Naive thymus-derived CD8-positive, alpha-beta T cell (primary cell): ENCODE measurements at regions of chr6 and their contacts with region 1.

Region 1: GRCh38 chr6:52361945-52362442 is at the start of gene PAQR8:
- DNase-seq: peak; percentile 75 to 90 (median 83)
- ATAC-seq: peak; percentile 84
- H3K4me3 Mint-ChIP-seq: peak within 1 kb of the TSS; percentile 97 to 99 (median 98)
- H3K27ac Mint-ChIP-seq: peak within 1 kb of the TSS; percentile 94 to 99 (median 98)
- H3K4me1 Mint-ChIP-seq: peaks cover 26 to 54% (median 50%) of the 10 kb centered on the region in 4 donors
- H3K27me3 Mint-ChIP-seq: no peaks in the 10 kb centered on the region
- polyA plus RNA-seq, gene PAQR8: 14.3 to 35.0 (median 30.6) TPM

Region 2: DNA sequence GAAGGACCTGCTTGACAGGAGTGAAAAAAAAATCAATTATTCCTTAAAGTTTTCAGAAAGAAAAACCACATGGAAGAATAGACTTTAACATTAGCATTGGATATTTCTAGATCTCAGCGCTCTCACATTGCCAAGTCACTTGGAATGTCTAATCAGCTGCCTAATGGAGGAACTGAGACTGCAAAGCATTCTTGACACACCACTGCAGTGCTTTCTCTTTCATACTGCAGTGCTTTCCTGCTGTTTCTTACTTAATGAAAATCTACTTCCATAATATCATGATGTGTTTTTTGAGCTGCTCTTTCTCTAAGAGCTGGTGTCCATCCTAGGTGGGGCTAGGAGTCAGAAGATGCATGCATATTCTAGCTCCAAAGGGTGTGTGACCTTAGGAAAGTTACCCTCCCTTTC is 57.0 kb before region 1 on chr6:
- POLR2A ChIA-PET with region 1: interaction called, 52 read pairs
- DNase-seq: peak in 1 of 10 donors; percentile 16
- ATAC-seq: peak; percentile 19 to 24
- H3K4me3 Mint-ChIP-seq: peak overlapping the region; percentile 46 to 84 (median 76)
- H3K27ac Mint-ChIP-seq: peak overlapping the region; percentile 91 to 99 (median 95)
- H3K4me1 Mint-ChIP-seq: peaks cover 46 to 78% (median 74%) of the 10 kb centered on the region in 4 donors
- H3K27me3 Mint-ChIP-seq: no peaks in the 10 kb centered on the region

Region 3: DNA sequence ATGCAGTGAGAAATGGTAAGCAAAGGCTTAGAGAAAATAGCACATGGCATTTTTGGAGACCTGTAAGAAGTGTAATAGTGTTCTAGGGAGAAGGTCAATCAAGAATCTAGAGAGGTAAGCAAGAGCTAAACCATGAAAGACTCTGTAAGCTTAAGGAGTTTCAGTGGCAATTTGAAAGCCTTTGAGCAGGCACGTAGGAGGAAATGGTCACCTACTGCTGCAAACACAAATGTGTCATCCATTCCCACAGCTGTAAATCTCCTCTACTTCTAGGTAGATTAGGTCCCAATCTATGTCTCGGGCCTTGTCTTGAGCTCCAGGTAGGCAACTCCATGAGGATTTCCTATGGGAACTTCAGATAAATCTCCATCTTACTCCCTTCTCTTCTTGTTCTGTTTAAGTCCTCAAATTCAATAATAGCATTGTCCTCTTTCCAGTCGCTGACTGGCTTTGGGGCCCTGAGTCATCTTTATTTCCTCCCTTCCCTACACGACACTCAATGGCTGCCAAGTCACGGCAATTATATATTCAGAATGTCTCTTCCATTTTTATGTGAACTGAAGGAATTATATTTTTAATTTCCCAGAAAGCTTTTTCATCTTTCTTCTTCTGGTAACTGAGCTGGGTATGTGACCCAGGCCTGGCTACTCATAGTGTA is 24.2 kb before region 1 on chr6:
- POLR2A ChIA-PET with region 1: interaction called, 19 read pairs
- DNase-seq: no peak
- ATAC-seq: no peak
- H3K4me3 Mint-ChIP-seq: peak overlapping the region in 2 of 10 donors; percentile 3 to 47
- H3K27ac Mint-ChIP-seq: peak overlapping the region in 7 of 10 donors; percentile 1 to 92 (median 61)
- H3K4me1 Mint-ChIP-seq: peaks cover 46 to 71% (median 64%) of the 10 kb centered on the region in 4 donors
- H3K27me3 Mint-ChIP-seq: no peaks in the 10 kb centered on the region

Region 4: DNA sequence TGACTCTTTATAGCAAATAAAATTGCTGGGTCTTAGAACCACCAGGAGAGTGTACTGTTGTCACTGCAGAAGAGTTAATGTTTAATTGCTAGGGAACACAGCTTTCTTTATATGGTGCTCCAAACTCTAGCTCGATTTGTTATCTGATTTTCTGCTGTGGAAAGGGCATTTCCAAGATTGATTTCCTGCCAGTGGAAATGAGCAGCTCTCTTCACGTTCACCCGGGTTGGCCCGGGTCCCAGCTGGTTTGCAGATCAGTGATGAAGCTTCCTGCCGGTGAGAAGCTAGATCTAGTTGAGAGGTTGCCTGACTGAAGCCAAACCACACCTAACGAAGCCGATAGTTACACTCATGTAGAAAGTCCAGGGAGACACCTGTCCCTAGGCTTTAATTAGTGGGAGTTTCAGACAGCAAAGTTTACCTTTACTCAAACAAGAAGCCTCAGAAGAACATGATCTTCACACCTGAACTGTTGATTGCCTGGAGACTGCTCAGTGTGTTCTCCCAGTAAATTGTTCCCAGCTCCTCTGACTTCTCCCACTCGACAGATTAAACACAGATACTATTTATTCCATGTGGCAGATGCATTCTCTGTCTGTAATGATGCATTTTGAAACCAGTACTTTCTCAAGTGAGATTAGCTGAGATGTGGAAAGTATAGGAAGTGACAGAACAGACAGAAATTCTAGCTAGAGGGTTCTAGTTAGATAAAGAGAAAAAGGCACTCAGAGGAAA is 27.8 kb after region 1 on chr6:
- POLR2A ChIA-PET with region 1: interaction called, 105 read pairs
- DNase-seq: peak; percentile 41 to 80 (median 65)
- ATAC-seq: peak; percentile 47 to 59
- H3K4me3 Mint-ChIP-seq: peak overlapping the region; percentile 71 to 93 (median 86)
- H3K27ac Mint-ChIP-seq: peak overlapping the region; percentile 93 to 100 (median 97)
- H3K4me1 Mint-ChIP-seq: peaks cover 51 to 93% (median 92%) of the 10 kb centered on the region in 4 donors
- H3K27me3 Mint-ChIP-seq: no peaks in the 10 kb centered on the region

Region 5: GRCh38 chr6:52419809-52420670 is 58.0 kb after region 1 on chr6 and contains the start of gene EFHC1:
- POLR2A ChIA-PET with region 1: interaction called, 12 read pairs
- DNase-seq: peak; percentile 96 to 99 (median 98)
- ATAC-seq: peak; percentile 90
- H3K4me3 Mint-ChIP-seq: no peak within 1 kb of the TSS
- H3K27ac Mint-ChIP-seq: no peak within 1 kb of the TSS
- H3K4me1 Mint-ChIP-seq: peaks cover 6 to 34% (median 16%) of the 10 kb centered on the region in 4 donors
- H3K27me3 Mint-ChIP-seq: no peaks in the 10 kb centered on the region
- polyA plus RNA-seq, gene EFHC1: 2.5 to 5.1 (median 2.9) TPM